Dorsolateral prefrontal cortex (tissue), 120 donors: ENCODE measurements at regions of chr2 and their contacts with region 1.

Region 1: GRCh38 chr2:64311948-64312621 is 141.9 kb upstream of the LGALSL start:
- DNase-seq: peak; percentile 60 to 89 (median 80)
- H3K4me3 ChIP-seq: peak overlapping the region in 50 of 59 donors; percentile 1 to 56 (median 31)
- H3K27ac ChIP-seq: peak overlapping the region in 56 of 59 donors; percentile 8 to 89 (median 73)
- H3K27me3 ChIP-seq: no peaks in the 10 kb centered on the region
- CTCF ChIP-seq: peak in 55 of 56 donors; percentile 10 to 80 (median 62)

Region 2: GRCh38 chr2:64052468-64053241 is 259.4 kb before region 1 on chr2:
- intact Hi-C with region 1: loop called (anchors 1 to 5 kb)
- DNase-seq: no peak
- H3K4me3 ChIP-seq: no peak overlapping the region
- H3K27ac ChIP-seq: peak overlapping the region in 8 of 59 donors; percentile 5 to 47 (median 19)
- H3K27me3 ChIP-seq: no peaks in the 10 kb centered on the region
- CTCF ChIP-seq: no peak

Region 3: DNA sequence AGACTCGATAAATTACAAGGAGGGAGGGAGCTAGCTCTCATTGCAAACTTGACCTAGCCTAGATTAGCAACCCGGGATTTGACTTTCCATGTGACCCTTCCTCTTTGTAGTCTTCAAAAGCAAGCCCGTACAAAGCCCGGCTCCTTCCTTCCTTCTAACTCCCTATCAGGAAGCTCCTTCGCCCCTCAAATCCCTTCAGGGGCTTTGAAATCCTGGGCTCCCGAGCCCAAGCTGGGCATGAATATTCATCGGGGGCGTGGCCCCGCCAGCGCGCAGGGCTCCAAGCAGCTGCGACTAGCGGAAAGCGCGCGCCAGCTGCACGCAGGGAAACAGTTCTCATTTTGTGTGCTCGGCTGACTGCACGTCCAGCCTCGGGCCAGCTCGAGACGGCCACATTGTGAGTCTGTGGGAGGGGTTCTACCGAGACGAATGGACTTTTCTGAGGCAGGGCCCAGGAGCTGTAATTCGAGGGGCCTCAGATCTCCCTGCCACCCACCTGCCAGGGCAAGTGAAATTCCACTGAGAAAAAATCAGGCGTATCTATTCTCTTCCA is 83.9 kb before region 1 on chr2:
- intact Hi-C with region 1: loop called (anchors 2 to 5 kb)
- DNase-seq: peak; percentile 65 to 93 (median 91)
- H3K4me3 ChIP-seq: peak overlapping the region; percentile 35 to 76 (median 62)
- H3K27ac ChIP-seq: peak overlapping the region; percentile 74 to 98 (median 94)
- H3K27me3 ChIP-seq: no peaks in the 10 kb centered on the region
- CTCF ChIP-seq: peak in 33 of 56 donors; percentile 11 to 59 (median 24)